ENCODE measurements at regions of chr1 and their contacts with region 1.

Region 1: DNA sequence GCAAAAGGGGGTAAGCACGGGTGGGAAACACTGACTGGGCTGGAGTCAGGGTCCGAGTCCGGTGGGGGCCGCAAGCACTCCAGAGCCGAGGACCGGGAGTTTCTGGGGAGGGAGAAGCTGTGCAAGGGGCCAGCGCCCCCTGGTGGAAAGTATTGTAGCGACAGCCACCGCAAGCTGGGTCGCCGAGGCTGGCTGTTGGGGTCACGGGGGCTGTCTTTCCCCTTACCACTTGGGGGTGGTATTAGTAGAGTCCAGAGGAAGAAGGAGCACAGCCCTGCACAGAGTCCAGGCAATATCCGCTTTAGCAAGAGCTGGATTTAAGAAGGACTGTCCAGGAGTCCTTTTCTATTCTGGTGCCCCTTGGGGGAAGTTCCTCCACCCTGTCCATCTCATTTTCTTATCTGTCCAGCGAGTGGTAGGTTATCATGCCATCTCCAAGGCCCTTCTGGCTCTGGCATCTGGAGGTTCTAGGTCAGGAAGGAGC is 17.9 kb upstream of the ETV3 start:
- DNase-seq: no peak
- ATAC-seq: peak; percentile 92
- H3K4me3 ChIP-seq: no peak overlapping the region
- H3K27ac ChIP-seq: no peak overlapping the region
- H3K4me1 ChIP-seq: peaks cover 9% of the 10 kb centered on the region
- H3K27me3 ChIP-seq: peaks cover 0 to 2% of the 10 kb centered on the region in 2 experiments; a peak in 2 of 4 replicates
- CTCF ChIP-seq: peak; percentile 80 to 95 (median 92)
- EP300 ChIP-seq: no peak
- POLR2A ChIP-seq: no peak
- RAD21 ChIP-seq: peak; percentile 86

Region 2: DNA sequence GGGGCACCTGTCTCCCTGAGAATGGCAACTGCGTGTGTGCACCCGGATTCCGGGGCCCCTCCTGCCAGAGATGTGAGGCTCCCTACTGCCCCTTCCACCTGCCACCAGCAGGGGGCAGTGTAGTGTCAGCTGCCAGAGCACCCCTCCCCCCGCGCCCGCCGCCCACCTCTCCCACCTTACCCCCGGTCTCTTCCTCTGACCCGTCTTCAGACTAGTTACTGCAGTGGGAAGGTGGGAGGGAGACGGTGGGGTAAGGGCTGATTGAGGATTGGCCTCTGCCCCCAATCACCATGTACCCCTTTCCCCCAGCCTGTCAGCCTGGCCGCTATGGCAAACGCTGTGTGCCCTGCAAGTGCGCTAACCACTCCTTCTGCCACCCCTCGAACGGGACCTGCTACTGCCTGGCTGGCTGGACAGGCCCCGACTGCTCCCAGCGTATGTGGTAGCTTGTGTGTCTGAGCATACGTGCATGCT is 245.8 kb before region 1 on chr1:
- CTCF ChIA-PET with region 1: interaction called, 3 read pairs
- POLR2A ChIA-PET with region 1: no interaction called
- RAD21 ChIA-PET with region 1: no interaction called
- SMC1A ChIA-PET with region 1: interaction called, 4 read pairs
- in situ Hi-C with region 1: no loop called
- intact Hi-C with region 1: loop called (anchors 10 kb)
- DNase-seq: no peak
- ATAC-seq: peak; percentile 77
- H3K4me3 ChIP-seq: no peak overlapping the region
- H3K27ac ChIP-seq: no peak overlapping the region
- H3K4me1 ChIP-seq: no peaks in the 10 kb centered on the region
- H3K27me3 ChIP-seq: peaks cover 2% of the 10 kb centered on the region in 2 experiments; a peak in 3 of 4 replicates
- CTCF ChIP-seq: peak; percentile 69 to 97 (median 70)
- EP300 ChIP-seq: no peak
- POLR2A ChIP-seq: no peak
- RAD21 ChIP-seq: peak; percentile 43

Region 3: DNA sequence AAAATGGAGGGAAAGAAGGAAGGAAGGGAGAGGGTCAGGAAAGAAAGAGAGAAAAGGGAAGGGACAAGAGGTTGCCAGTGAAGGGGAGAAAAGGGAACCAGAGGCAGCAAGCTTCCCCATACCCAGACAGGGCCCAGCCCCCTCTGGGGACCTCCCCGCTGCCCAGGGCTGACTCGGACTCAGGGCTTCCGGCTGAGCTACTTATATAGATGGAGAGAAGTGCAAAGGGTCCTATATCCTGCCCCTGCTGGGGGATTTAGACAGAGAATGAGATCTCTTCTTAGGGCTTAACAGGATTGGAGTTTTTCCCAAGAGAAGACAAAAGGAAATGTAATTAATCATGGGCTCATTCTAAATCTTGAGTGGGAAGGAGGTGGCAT is 56.5 kb before region 1 on chr1 and contains the start of gene ETV3L:
- CTCF ChIA-PET with region 1: interaction called, 41 read pairs
- POLR2A ChIA-PET with region 1: interaction called, 5 read pairs
- RAD21 ChIA-PET with region 1: interaction called, 12 read pairs
- SMC1A ChIA-PET with region 1: interaction called, 16 read pairs
- in situ Hi-C with region 1: loop called (anchors 5 kb)
- intact Hi-C with region 1: no loop called
- DNase-seq: no peak
- ATAC-seq: peak; percentile 76
- H3K4me3 ChIP-seq: no peak within 1 kb of the TSS
- H3K27ac ChIP-seq: no peak within 1 kb of the TSS
- H3K4me1 ChIP-seq: peaks cover 6% of the 10 kb centered on the region
- H3K27me3 ChIP-seq: no peaks in the 10 kb centered on the region; a peak in 1 of 4 replicates
- CTCF ChIP-seq: no peak
- EP300 ChIP-seq: no peak
- POLR2A ChIP-seq: no peak
- RAD21 ChIP-seq: no peak
- polyA plus RNA-seq, gene ETV3L: 0.03 to 0.04 TPM

Region 4: DNA sequence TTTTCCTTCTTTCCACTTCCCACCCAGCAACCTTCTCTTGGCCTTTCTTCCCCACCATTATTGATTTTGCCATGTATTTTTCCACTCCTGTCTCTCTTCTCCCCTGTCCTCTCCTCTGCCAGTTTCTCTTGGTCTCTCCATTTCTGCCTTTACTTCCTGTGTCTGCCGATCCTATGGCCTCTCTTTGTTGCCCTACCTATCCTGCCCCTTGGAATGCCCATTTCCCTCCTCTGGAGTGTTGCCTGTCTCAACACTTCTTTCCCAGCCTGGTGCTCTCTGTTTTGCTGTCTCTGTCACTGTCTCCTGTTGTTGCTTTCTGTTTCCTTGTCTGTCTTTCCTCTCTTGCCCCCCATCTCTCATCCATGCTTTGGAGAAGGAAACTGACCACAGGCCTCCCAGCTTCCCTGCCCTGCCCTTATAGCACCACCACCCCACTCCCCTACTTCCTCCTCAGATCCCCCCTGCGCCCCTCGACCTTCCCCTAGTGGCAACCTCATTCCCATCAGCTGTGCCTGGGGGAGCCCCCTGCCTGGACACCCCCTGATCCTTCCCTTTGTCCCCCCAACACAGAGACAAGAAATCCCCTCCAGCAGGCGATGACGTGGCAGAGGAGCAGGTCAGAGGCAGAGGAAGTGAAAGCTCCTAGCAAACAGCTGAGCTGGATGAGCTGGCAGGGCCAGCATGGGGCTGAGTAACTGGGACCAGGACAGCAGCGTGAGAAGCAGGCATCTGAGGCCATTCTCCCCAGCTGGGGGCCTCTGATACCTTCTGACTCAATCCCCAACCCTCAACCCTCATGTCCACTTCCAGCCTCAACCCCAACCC is 49.9 kb before region 1 on chr1:
- CTCF ChIA-PET with region 1: interaction called, 13 read pairs
- POLR2A ChIA-PET with region 1: no interaction called
- RAD21 ChIA-PET with region 1: interaction called, 11 read pairs
- SMC1A ChIA-PET with region 1: interaction called, 13 read pairs
- in situ Hi-C with region 1: no loop called
- intact Hi-C with region 1: no loop called
- DNase-seq: peak; percentile 41
- ATAC-seq: peak; percentile 97
- H3K4me3 ChIP-seq: no peak overlapping the region
- H3K27ac ChIP-seq: peak overlapping the region; percentile 55
- H3K4me1 ChIP-seq: peaks cover 18% of the 10 kb centered on the region
- H3K27me3 ChIP-seq: no peaks in the 10 kb centered on the region; a peak in 1 of 4 replicates
- CTCF ChIP-seq: no peak
- EP300 ChIP-seq: peak; percentile 22 to 91; a peak in 2 of 4 replicates
- POLR2A ChIP-seq: 0 out of 2 replicates have a peak, but pooled peaks have one; percentile 21
- RAD21 ChIP-seq: no peak

Region 5: GRCh38 chr1:157138220-157139051 is 17.7 kb before region 1 on chr1 and contains the start of gene ETV3:
- CTCF ChIA-PET with region 1: interaction called, 74 read pairs
- POLR2A ChIA-PET with region 1: interaction called, 5 read pairs
- RAD21 ChIA-PET with region 1: interaction called, 54 read pairs
- SMC1A ChIA-PET with region 1: interaction called, 65 read pairs
- in situ Hi-C with region 1: no loop called
- intact Hi-C with region 1: no loop called
- DNase-seq: peak; percentile 42
- ATAC-seq: peak; percentile 90
- H3K4me3 ChIP-seq: peak within 1 kb of the TSS; percentile 96
- H3K27ac ChIP-seq: peak within 1 kb of the TSS; percentile 66
- H3K4me1 ChIP-seq: peaks cover 13% of the 10 kb centered on the region; the same call in 1 of the 2 replicates
- H3K27me3 ChIP-seq: no peaks in the 10 kb centered on the region
- CTCF ChIP-seq: no peak
- EP300 ChIP-seq: no peak
- POLR2A ChIP-seq: peak; percentile 93
- RAD21 ChIP-seq: no peak
- polyA plus RNA-seq, gene ETV3: 1.7 to 2.9 TPM

Region 6: GRCh38 chr1:157390651-157391050 is 234.6 kb after region 1 on chr1:
- CTCF ChIA-PET with region 1: no interaction called
- POLR2A ChIA-PET with region 1: no interaction called
- RAD21 ChIA-PET with region 1: no interaction called
- SMC1A ChIA-PET with region 1: no interaction called
- in situ Hi-C with region 1: no loop called
- intact Hi-C with region 1: no loop called
- DNase-seq: no peak
- ATAC-seq: no peak
- H3K4me3 ChIP-seq: no peak overlapping the region
- H3K27ac ChIP-seq: no peak overlapping the region
- H3K4me1 ChIP-seq: no peaks in the 10 kb centered on the region
- H3K27me3 ChIP-seq: peaks cover 0 to 7% of the 10 kb centered on the region in 2 experiments; a peak in 2 of 4 replicates
- CTCF ChIP-seq: no peak
- EP300 ChIP-seq: no peak
- POLR2A ChIP-seq: no peak
- RAD21 ChIP-seq: no peak

Measured in GM12878 (cell line).